ENCODE measurements at regions of chr19 and their contacts with region 1.

Region 1: DNA sequence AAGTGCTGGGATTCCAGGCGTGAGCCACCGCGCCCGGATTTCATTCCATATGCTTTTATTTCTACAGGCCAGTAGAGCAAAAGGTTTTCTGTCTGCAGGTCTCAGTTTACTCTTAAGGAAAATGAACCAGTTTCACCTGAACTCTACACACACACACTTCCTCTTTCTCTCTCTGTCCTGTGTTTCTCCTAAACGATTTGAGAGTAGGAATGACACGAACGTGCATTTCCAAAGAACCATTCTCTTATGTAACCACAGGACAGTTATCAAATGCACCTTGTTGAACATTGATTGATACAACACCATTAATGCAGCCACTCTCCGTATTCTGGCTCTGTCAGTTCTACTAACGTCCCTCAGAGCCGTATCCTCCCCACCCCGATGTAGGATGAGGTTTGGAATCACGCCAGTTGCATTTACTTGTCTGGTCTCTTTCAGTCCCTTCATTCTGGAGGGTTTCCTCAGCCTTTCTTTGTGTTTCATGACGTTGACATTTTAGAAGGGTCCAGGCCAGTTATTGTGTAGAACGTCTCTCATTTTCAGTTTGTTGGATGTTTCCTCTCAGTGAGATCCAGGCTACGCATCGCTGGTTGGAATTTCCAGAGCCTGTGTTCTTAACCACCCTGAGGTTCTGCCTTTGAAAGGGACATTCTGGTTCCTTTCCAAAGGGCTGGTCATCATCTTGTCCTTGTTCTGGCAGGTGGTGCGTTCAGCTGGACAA is 36.0 kb downstream of the BICRA start:
- DNase-seq: no peak
- H3K4me3 ChIP-seq: no peak overlapping the region
- H3K27ac ChIP-seq: 0 out of 2 replicates have a peak overlapping the region, but pooled peaks have one; percentile 15
- H3K4me1 ChIP-seq: peaks cover 50% of the 10 kb centered on the region
- H3K27me3 ChIP-seq: no peaks in the 10 kb centered on the region
- CTCF ChIP-seq: no peak

Region 2: GRCh38 chr19:47608074-47608918 is 36.6 kb before region 1 on chr19:
- CTCF ChIA-PET with region 1: no interaction called
- POLR2A ChIA-PET with region 1: interaction called, 3 read pairs
- intact Hi-C with region 1: loop called (anchors 1 kb)
- DNase-seq: peak; percentile 80 to 98
- H3K4me3 ChIP-seq: peak overlapping the region; percentile 100
- H3K27ac ChIP-seq: peak overlapping the region; percentile 68
- H3K4me1 ChIP-seq: peaks cover 11% of the 10 kb centered on the region; the same call in 1 of the 2 replicates
- H3K27me3 ChIP-seq: no peaks in the 10 kb centered on the region
- CTCF ChIP-seq: peak; percentile 21; the same call in 1 of the 2 replicates

Region 3: DNA sequence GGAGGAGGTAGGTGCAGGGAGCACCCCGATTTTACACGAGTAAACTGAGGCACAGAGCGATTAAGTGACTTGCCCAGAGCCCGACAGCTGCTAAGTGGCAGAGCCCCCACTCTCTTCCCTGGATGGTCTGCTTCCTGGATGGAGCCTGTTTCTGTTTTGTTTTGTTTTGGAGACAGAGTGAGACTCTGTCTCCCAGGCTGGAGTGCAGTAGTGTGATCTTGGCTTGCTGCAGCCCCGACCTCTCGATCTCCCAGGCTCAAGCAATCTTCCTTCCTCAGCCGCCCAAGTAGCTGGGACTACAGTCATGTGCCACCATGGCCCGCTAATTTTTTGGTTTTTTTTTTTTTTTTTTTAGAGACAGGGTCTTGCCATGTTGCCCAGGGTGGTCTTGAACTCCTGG is 18.7 kb before region 1 on chr19:
- CTCF ChIA-PET with region 1: no interaction called
- POLR2A ChIA-PET with region 1: no interaction called
- intact Hi-C with region 1: no loop called
- DNase-seq: no peak
- H3K4me3 ChIP-seq: no peak overlapping the region
- H3K27ac ChIP-seq: no peak overlapping the region
- H3K4me1 ChIP-seq: no peaks in the 10 kb centered on the region
- H3K27me3 ChIP-seq: no peaks in the 10 kb centered on the region
- CTCF ChIP-seq: no peak

Region 4: GRCh38 chr19:47663841-47664771 is 19.2 kb after region 1 on chr19:
- CTCF ChIA-PET with region 1: no interaction called
- POLR2A ChIA-PET with region 1: interaction called, 6 read pairs
- intact Hi-C with region 1: loop called (anchors 1 kb)
- DNase-seq: peak; percentile 68 to 92
- H3K4me3 ChIP-seq: peak overlapping the region; percentile 35
- H3K27ac ChIP-seq: peak overlapping the region; percentile 99
- H3K4me1 ChIP-seq: peaks cover 82% of the 10 kb centered on the region
- H3K27me3 ChIP-seq: no peaks in the 10 kb centered on the region
- CTCF ChIP-seq: 0 out of 2 replicates have a peak, but pooled peaks have one; percentile 14